Naive thymus-derived CD4-positive, alpha-beta T cell (primary cell): ENCODE measurements at regions of chr12 and their contacts with region 1.

Region 1: DNA sequence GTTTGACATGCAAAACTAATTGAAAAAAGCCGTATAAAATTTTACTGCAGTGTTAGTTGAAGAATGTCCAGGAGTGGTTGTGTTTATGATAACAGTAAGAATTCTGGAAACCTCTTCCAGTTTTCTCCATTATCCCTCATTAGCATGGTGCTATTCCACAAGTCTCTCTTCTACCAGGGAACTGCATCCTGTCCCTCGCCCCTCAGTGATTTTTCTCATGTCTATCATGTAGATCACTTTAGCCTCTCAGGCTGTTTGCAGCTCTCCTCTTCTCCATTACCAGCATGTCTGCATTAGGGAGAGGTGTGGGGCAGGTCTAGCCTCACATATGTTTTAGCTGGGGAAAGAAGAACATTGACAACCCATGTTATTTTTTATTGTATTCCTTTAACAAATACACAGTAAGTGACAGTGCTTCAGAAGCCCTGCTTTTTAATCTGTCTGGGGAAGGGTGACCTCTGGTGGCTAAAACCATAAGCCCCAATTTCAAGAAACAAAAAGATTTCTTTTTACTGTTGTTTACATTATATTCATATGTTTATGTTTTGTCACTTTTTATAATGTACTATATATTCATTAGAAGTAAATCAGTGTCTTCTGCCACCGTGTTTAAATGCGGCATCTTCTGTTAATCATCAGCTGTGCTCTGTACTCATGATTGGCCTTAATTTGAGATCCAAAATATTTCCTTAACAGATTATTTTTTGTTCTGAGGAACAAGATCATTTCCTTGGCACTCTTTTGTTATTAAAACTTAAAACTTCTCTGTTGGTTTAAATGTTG is 70.7 kb downstream of the RASSF8 start:
- DNase-seq: peak in 6 of 9 donors; percentile 23 to 54 (median 40)
- ATAC-seq: no peak
- H3K4me3 ChIP-seq: no peak overlapping the region
- H3K4me3 Mint-ChIP-seq: no peak overlapping the region
- H3K27ac ChIP-seq: no peak overlapping the region
- H3K27ac Mint-ChIP-seq: no peak overlapping the region
- H3K4me1 ChIP-seq: no peaks in the 10 kb centered on the region
- H3K4me1 Mint-ChIP-seq: peaks cover 0 to 4% (median 0%) of the 10 kb centered on the region in 7 donors
- H3K27me3 ChIP-seq: no peaks in the 10 kb centered on the region
- H3K27me3 Mint-ChIP-seq: peaks cover 0 to 22% (median 5%) of the 10 kb centered on the region in 5 donors

Region 2: DNA sequence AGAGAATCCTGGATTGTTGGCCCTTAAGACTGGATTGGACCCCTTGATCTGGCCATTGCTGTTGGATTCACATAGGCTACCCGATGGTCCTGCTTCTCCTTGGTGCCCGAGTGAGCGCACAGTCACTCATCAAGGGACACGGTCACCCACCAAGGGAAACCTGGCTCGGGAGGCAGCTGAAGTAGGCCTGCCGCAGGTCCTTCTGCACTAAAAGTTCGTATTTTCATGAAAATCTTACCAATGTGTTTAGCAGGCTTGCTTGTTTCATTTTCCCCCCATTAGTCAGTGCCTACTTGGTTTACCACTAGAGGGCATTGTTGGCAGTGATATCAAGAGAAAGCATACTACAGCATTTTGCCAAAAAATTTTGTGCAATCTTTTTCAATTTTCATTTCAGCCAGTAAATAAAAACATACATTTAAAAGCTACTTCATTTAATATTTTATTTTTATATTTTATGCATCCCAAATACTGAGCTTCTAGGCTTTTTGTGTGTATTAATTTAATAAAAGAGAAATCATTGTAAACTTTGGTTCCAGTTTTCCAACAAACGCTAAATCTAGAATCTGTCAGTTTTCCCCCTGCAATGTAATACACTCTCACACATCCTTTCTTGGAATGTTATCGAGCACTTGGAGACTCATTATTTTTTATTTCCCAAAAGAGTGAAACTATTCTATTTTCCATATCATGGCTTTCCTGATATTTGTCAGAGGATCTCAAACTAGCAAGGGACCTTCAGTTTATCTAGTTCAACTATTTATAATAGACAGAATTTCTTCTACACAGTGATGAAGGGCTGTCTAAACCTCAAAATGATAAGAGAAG is 592.7 kb before region 1 on chr12:
- CTCF ChIA-PET with region 1: interaction called, 5 read pairs
- POLR2A ChIA-PET with region 1: no interaction called
- intact Hi-C with region 1: loop called in 1 of 2 experiments (anchors 1 kb)
- DNase-seq: peak in 8 of 9 donors; percentile 25 to 70 (median 52)
- ATAC-seq: peak; percentile 79
- H3K4me3 ChIP-seq: no peak overlapping the region
- H3K4me3 Mint-ChIP-seq: peak overlapping the region in 8 of 10 donors; percentile 29 to 71 (median 54)
- H3K27ac ChIP-seq: no peak overlapping the region
- H3K27ac Mint-ChIP-seq: peak overlapping the region in 4 of 9 donors; percentile 22 to 85 (median 54)
- H3K4me1 ChIP-seq: peaks cover 0 to 4% of the 10 kb centered on the region in 2 donors
- H3K4me1 Mint-ChIP-seq: peaks cover 3 to 13% (median 6%) of the 10 kb centered on the region in 7 donors
- H3K27me3 ChIP-seq: no peaks in the 10 kb centered on the region
- H3K27me3 Mint-ChIP-seq: peaks cover 0 to 7% (median 0%) of the 10 kb centered on the region in 5 donors

Region 3: DNA sequence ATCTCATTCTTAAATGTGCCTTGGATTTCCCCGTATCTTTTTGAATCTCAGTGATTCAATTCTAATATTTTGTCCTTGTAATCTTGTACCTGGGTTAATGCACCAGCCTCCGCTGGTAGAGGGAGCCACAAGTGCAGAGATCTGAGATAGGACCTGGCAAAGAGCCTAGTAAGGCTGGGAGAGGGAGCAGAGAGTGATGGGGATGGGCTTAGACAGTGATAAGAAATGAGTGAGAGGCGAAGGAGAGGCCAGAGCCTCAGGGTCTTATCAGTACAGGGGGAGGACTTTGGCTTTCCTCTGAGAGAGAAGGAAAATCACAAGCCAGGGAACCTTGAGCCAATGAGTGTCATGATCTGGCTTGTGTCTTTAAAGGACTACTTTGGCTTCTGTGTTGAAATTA is 445.6 kb before region 1 on chr12:
- CTCF ChIA-PET with region 1: interaction called, 3 read pairs
- POLR2A ChIA-PET with region 1: no interaction called
- intact Hi-C with region 1: loop called in 1 of 2 experiments (anchors 5 kb)
- DNase-seq: peak in 3 of 9 donors; percentile 19 to 38 (median 29)
- ATAC-seq: no peak
- H3K4me3 ChIP-seq: no peak overlapping the region
- H3K4me3 Mint-ChIP-seq: peak overlapping the region in 1 of 10 donors; percentile 4
- H3K27ac ChIP-seq: no peak overlapping the region
- H3K27ac Mint-ChIP-seq: peak overlapping the region in 3 of 9 donors; percentile 6 to 45 (median 21)
- H3K4me1 ChIP-seq: no peaks in the 10 kb centered on the region
- H3K4me1 Mint-ChIP-seq: peaks cover 0 to 37% (median 2%) of the 10 kb centered on the region in 7 donors
- H3K27me3 ChIP-seq: no peaks in the 10 kb centered on the region
- H3K27me3 Mint-ChIP-seq: peaks cover 0 to 7% (median 0%) of the 10 kb centered on the region in 5 donors